ENCODE measurements at regions of chr14 and their contacts with region 1.

Region 1: DNA sequence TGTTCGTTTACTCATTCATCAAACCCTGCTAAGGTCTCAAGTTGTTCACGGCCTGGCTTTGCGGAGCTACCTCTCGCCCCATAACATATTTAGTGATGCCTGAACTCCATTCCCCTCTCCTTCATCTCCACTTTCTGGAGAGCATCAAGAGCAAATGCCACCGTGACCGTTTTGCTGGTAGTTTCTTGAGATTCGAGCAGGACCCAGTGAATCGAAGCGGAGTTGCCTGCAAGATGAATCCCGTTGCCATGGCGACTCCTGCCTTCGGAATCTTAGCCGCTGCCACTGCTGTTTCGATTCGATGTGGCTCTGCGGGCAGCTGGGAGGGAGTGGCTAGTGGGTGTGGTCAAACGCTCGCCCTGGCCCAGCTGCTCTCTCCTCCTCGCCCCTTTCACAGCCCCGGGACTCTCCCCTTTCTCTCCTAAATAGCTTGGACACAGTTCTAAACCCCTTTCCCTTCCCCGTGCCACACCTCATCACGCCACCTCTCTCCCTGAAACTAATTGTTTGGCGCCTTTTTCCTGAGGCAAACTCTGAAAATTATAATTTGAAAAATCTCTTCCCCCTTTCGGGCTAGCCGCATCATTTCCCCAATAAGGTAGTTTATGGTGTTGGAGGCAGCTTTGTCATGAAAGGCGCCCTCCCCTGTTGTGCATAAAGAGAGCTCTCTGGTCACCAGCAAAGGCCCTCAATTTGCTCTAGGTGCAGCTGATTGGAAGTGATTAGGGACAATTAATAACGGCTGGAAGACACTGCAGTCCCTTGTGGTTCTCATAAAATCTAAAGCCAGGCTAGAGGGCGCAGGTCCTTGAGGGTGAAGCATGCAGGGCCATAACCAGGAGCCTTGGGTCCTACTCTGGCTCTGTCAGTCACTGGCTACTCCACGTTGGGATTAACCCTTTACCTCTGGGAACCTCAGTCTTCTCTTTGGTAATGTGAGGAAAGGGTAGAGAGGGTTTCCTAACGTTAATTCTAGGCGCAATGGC is 1.6 kb downstream of the DAAM1 start:
- DNase-seq: peak; percentile 67 to 89 (median 76)
- H3K4me3 ChIP-seq: peak overlapping the region; percentile 77 to 82
- H3K4me3 Mint-ChIP-seq: peak overlapping the region; percentile 95 to 100 (median 98)
- H3K27ac ChIP-seq: peak overlapping the region; percentile 88
- H3K27ac Mint-ChIP-seq: peak overlapping the region; percentile 84 to 99 (median 98)
- H3K4me1 ChIP-seq: peaks cover 16% of the 10 kb centered on the region
- H3K4me1 Mint-ChIP-seq: peaks cover 14 to 34% (median 16%) of the 10 kb centered on the region in 4 donors
- H3K27me3 ChIP-seq: peaks cover 5% of the 10 kb centered on the region
- H3K27me3 Mint-ChIP-seq: peaks cover 0 to 3% of the 10 kb centered on the region in 2 donors

Region 2: DNA sequence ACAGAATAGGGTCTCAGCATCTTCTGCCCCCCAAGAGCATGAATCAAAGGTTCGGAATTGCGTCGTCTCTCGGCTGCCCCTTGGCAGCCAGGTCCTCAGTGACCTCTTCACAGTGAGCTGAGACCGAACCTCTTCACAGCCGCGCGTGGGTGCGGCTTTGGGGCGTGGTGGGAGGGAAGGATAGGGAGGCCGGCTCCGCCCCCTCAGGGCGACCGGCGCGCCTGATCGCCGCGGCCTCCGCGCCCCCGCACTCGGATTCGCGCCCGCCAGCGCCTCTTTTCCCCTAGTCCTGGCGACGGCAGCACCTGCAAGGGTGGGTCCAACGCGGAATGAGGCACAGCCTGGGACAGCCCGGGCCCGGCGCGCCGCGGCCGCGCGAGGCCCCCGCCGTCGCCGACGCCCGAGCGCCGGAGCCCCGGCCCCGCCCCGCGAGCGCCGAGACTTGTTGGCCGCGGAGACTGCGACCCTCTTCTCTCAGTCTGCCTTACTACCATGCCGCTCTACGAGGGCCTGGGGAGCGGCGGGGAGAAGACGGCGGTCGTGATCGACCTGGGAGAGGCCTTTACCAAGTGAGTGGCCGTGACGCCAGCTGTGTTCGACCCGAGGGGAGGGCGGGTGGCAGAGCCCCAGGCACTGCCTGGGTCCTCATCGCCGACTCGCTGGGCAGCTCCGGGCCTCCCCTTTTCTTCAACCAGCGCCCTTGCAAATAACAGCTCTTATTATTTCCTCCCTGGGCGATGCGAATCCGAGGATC is 990.2 kb before region 1 on chr14 and contains the start of gene ACTR10:
- CTCF ChIA-PET with region 1: no interaction called
- POLR2A ChIA-PET with region 1: no interaction called
- intact Hi-C with region 1: loop called (anchors 1 kb)
- DNase-seq: peak; percentile 84 to 91 (median 87)
- H3K4me3 ChIP-seq: peak within 1 kb of the TSS; percentile 64 to 75
- H3K4me3 Mint-ChIP-seq: peak within 1 kb of the TSS; percentile 94 to 97 (median 96)
- H3K27ac ChIP-seq: peak within 1 kb of the TSS; percentile 78
- H3K27ac Mint-ChIP-seq: peak within 1 kb of the TSS; percentile 94 to 99 (median 98)
- H3K4me1 ChIP-seq: peaks cover 33% of the 10 kb centered on the region
- H3K4me1 Mint-ChIP-seq: peaks cover 22 to 48% (median 34%) of the 10 kb centered on the region in 4 donors
- H3K27me3 ChIP-seq: no peaks in the 10 kb centered on the region
- H3K27me3 Mint-ChIP-seq: no peaks in the 10 kb centered on the region
- total RNA-seq, gene ACTR10: 53.7 to 54.9 TPM

Region 3: DNA sequence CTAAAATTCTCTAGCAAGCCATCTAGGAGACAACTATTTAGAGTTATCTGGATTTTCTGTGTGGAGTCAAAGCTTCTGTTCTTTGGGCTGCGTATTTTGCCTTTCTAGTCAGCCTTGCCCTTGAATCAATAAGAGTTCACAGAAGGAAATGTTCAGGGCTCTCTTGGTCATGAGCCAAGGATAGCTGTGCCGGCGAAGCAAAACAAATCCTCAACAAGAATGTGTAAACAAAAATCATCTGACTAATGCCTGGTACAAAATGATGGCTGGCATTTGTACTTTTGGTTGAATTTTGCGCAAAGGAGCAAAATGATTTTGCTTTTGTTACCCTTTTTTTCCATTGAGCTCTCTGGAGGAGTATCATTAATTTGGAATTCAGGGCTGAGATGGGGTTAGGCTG is 381.3 kb before region 1 on chr14:
- CTCF ChIA-PET with region 1: no interaction called
- POLR2A ChIA-PET with region 1: no interaction called
- intact Hi-C with region 1: no loop called
- DNase-seq: no peak
- H3K4me3 ChIP-seq: no peak overlapping the region
- H3K4me3 Mint-ChIP-seq: no peak overlapping the region
- H3K27ac ChIP-seq: no peak overlapping the region
- H3K27ac Mint-ChIP-seq: no peak overlapping the region
- H3K4me1 ChIP-seq: no peaks in the 10 kb centered on the region
- H3K4me1 Mint-ChIP-seq: no peaks in the 10 kb centered on the region
- H3K27me3 ChIP-seq: no peaks in the 10 kb centered on the region
- H3K27me3 Mint-ChIP-seq: peaks cover 1 to 6% of the 10 kb centered on the region in 2 donors

Region 4: DNA sequence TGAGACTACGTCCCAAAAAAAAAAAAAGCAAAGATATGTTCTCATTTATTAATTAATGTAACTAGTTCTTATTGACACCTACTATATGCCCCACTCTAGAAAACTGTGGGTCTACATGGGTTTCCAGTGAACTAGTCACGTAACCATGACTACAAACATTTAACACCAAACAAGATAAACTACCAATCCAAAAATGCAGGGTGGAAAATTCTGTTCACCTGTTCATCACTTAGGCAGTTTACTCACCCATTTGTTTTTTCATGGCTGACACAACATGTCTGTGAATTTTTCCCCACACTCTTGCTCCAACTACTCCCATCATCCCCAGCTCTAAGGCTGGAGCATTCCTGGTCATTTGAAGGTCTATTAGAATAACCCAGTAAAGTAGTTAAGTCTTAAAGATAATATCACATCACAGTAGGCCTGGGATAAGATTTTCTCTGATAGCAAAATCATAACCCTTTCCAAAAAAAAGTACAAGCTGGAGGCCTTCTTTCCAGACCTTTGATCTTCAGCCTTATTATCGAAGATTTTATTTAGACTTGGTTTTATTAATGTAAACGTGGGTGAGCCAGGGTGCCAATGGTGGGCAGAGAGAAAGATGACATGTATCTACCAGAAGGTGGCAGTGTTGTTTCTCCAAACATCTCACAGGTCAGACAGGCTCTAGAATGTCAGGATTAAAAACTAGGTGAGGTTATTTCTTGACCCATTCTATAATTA is 63.2 kb before region 1 on chr14:
- CTCF ChIA-PET with region 1: interaction called, 18 read pairs
- POLR2A ChIA-PET with region 1: interaction called, 5 read pairs
- intact Hi-C with region 1: loop called (anchors 1 kb)
- DNase-seq: peak in 4 of 5 donors; percentile 55 to 62 (median 61)
- H3K4me3 ChIP-seq: no peak overlapping the region
- H3K4me3 Mint-ChIP-seq: no peak overlapping the region
- H3K27ac ChIP-seq: no peak overlapping the region
- H3K27ac Mint-ChIP-seq: no peak overlapping the region
- H3K4me1 ChIP-seq: no peaks in the 10 kb centered on the region
- H3K4me1 Mint-ChIP-seq: peaks cover 0 to 3% (median 0%) of the 10 kb centered on the region in 4 donors
- H3K27me3 ChIP-seq: no peaks in the 10 kb centered on the region
- H3K27me3 Mint-ChIP-seq: peaks cover 13 to 19% of the 10 kb centered on the region in 2 donors

Region 5: GRCh38 chr14:59464486-59465315 is 274.6 kb after region 1 on chr14:
- CTCF ChIA-PET with region 1: no interaction called
- POLR2A ChIA-PET with region 1: interaction called, 9 read pairs
- intact Hi-C with region 1: loop called (anchors 1 kb)
- DNase-seq: peak; percentile 63 to 79 (median 67)
- H3K4me3 ChIP-seq: peak overlapping the region in 1 of 2 donors; percentile 54
- H3K4me3 Mint-ChIP-seq: peak overlapping the region; percentile 87 to 94 (median 92)
- H3K27ac ChIP-seq: peak overlapping the region; percentile 33
- H3K27ac Mint-ChIP-seq: peak overlapping the region; percentile 80 to 92 (median 90)
- H3K4me1 ChIP-seq: peaks cover 9% of the 10 kb centered on the region
- H3K4me1 Mint-ChIP-seq: peaks cover 5 to 16% (median 10%) of the 10 kb centered on the region in 4 donors
- H3K27me3 ChIP-seq: no peaks in the 10 kb centered on the region
- H3K27me3 Mint-ChIP-seq: peaks cover 0 to 2% of the 10 kb centered on the region in 2 donors

Region 6: GRCh38 chr14:59576332-59577294 is 386.5 kb after region 1 on chr14 and contains the start of gene CCDC175:
- CTCF ChIA-PET with region 1: no interaction called
- POLR2A ChIA-PET with region 1: no interaction called
- intact Hi-C with region 1: loop called (anchors 5 kb)
- DNase-seq: peak; percentile 76 to 84 (median 80)
- H3K4me3 ChIP-seq: peak within 1 kb of the TSS; percentile 63 to 69
- H3K4me3 Mint-ChIP-seq: peak within 1 kb of the TSS; percentile 76 to 88 (median 82)
- H3K27ac ChIP-seq: no peak within 1 kb of the TSS
- H3K27ac Mint-ChIP-seq: peak within 1 kb of the TSS in 6 of 7 donors; percentile 0 to 91 (median 42)
- H3K4me1 ChIP-seq: peaks cover 10% of the 10 kb centered on the region
- H3K4me1 Mint-ChIP-seq: peaks cover 5 to 11% (median 6%) of the 10 kb centered on the region in 4 donors
- H3K27me3 ChIP-seq: no peaks in the 10 kb centered on the region
- H3K27me3 Mint-ChIP-seq: peaks cover 3 to 4% of the 10 kb centered on the region in 2 donors
- total RNA-seq, gene CCDC175: not detected